H1 (cell line): ENCODE measurements at regions of chr16 and their contacts with region 1.

Region 1: GRCh38 chr16:49513040-49513439 is 139.4 kb downstream of the C16orf78 start:
- DNase-seq: no peak
- H3K4me3 ChIP-seq: no peak overlapping the region
- H3K27ac ChIP-seq: no peak overlapping the region
- H3K4me1 ChIP-seq: no peaks in the 10 kb centered on the region
- H3K27me3 ChIP-seq: no peaks in the 10 kb centered on the region
- CTCF ChIP-seq: peak; percentile 53 to 61 (median 61)
- EP300 ChIP-seq: no peak
- POLR2A ChIP-seq: no peak
- RAD21 ChIP-seq: peak; percentile 65 to 77

Region 2: DNA sequence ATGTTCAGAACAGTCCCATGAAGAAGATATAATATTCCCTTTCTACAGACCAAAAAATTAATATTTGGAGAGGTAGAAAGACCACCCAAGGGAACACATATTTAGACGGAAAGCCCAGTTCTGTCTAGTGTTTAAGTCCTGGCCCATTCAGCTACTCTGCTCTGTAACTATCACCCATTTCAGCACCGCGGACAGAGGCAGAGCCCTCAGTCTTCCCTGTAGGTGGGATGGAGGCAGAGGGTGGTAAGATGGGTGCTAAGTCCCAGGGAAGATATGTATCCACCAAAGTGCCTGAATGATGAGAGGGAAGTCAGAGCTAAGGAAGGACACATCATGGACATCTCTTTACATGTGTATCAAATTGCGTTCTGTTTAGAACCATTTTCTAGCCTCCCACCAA is 167.2 kb before region 1 on chr16:
- CTCF ChIA-PET with region 1: no interaction called
- POLR2A ChIA-PET with region 1: no interaction called
- DNase-seq: peak in 1 of 2 experiments; percentile 76
- H3K4me3 ChIP-seq: no peak overlapping the region
- H3K27ac ChIP-seq: no peak overlapping the region
- H3K4me1 ChIP-seq: peaks cover 0 to 3% (median 0%) of the 10 kb centered on the region in 4 experiments; a peak in 1 of 7 replicates
- H3K27me3 ChIP-seq: no peaks in the 10 kb centered on the region
- CTCF ChIP-seq: no peak
- EP300 ChIP-seq: no peak
- POLR2A ChIP-seq: no peak
- RAD21 ChIP-seq: no peak

Region 3: GRCh38 chr16:49524216-49524946 is 11.3 kb after region 1 on chr16:
- CTCF ChIA-PET with region 1: interaction called, 26 read pairs
- POLR2A ChIA-PET with region 1: no interaction called
- DNase-seq: no peak
- H3K4me3 ChIP-seq: no peak overlapping the region
- H3K27ac ChIP-seq: no peak overlapping the region
- H3K4me1 ChIP-seq: peaks cover 0 to 21% (median 10%) of the 10 kb centered on the region in 4 experiments; a peak in 5 of 7 replicates
- H3K27me3 ChIP-seq: no peaks in the 10 kb centered on the region
- CTCF ChIP-seq: no peak
- EP300 ChIP-seq: no peak
- POLR2A ChIP-seq: no peak
- RAD21 ChIP-seq: no peak

Region 4: GRCh38 chr16:49542391-49542891 is 29.4 kb after region 1 on chr16:
- CTCF ChIA-PET with region 1: interaction called, 10 read pairs
- POLR2A ChIA-PET with region 1: no interaction called
- DNase-seq: no peak
- H3K4me3 ChIP-seq: no peak overlapping the region
- H3K27ac ChIP-seq: no peak overlapping the region
- H3K4me1 ChIP-seq: peaks cover 0 to 18% (median 10%) of the 10 kb centered on the region in 4 experiments; a peak in 5 of 7 replicates
- H3K27me3 ChIP-seq: no peaks in the 10 kb centered on the region
- CTCF ChIP-seq: no peak
- EP300 ChIP-seq: no peak
- POLR2A ChIP-seq: no peak
- RAD21 ChIP-seq: no peak

Region 5: DNA sequence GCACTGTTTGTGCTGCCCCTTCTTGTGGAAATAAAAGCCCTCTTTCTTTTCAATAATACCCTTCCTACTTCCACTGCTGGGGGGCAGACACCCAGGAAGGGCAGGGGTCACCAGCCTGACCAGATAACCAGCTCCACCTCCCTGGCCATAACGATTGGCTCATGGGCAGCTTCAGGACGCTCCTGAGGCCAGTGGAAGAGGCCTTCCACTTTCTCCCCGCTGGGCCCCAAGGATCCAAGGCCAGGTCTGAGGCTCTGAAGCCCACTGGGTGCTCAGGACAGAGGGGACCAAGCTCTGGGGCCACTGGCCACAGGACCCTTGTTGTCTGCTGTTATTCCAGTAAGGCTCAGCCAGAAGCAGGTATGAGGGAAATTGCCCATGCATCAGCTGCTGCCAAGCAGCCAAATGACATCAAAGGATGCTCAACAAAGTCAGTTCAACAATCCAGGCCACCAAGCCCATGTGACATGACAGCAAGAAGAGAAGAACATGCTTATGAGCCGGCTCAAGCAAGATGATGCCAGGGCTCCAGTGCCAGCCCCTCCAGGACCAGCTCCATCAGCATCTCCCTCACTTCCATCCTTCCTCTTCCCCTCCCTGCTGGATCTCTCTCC is 104.1 kb after region 1 on chr16:
- CTCF ChIA-PET with region 1: no interaction called
- POLR2A ChIA-PET with region 1: no interaction called
- DNase-seq: peak in 1 of 2 experiments; percentile 29
- H3K4me3 ChIP-seq: no peak overlapping the region
- H3K27ac ChIP-seq: no peak overlapping the region
- H3K4me1 ChIP-seq: peaks cover 0 to 13% (median 10%) of the 10 kb centered on the region in 4 experiments; a peak in 6 of 7 replicates
- H3K27me3 ChIP-seq: no peaks in the 10 kb centered on the region
- CTCF ChIP-seq: no peak
- EP300 ChIP-seq: no peak
- POLR2A ChIP-seq: no peak
- RAD21 ChIP-seq: no peak